Mammary epithelial cell (primary cell): ENCODE measurements at regions of chr9 and their contacts with region 1.

Region 1: GRCh38 chr9:23717505-23717904 is 108.5 kb downstream of the ELAVL2 start:
- DNase-seq: no peak
- H3K4me3 ChIP-seq: no peak overlapping the region
- H3K27ac ChIP-seq: no peak overlapping the region
- H3K4me1 ChIP-seq: no peaks in the 10 kb centered on the region
- H3K27me3 ChIP-seq: no peaks in the 10 kb centered on the region
- CTCF ChIP-seq: no peak

Region 2: DNA sequence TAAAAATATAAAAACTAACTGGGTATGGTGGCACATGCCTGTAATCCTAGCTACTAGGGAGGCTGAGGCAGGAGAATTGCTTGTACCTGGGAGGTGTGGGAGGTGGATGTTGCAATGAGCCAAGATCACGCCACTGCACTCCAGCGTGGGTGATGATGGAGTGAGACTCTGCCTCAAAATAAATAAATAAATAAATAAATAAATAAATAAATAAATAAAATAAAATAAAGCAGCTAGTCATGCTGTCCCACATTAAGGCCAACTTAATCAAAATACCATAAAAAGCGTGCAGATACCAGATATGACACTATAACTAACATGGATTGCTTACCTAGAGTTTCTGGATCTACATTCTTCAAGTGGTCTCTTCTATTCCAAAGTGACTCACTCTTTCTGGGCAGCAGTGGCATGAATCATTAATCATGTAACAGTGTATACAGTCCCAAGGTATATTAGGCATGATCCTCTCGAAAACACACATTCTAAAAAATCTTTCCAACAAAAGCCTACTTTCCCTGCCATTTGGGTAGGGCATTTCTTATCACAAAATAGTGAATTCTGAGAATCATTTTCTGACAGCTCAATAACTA is 78.6 kb before region 1 on chr9:
- CTCF ChIA-PET with region 1: no interaction called
- dilution Hi-C with region 1: loop called (anchors 5 kb)
- in situ Hi-C with region 1: no loop called
- intact Hi-C with region 1: no loop called
- DNase-seq: peak; percentile 63
- H3K4me3 ChIP-seq: no peak overlapping the region
- H3K27ac ChIP-seq: no peak overlapping the region
- H3K4me1 ChIP-seq: peaks cover 5% of the 10 kb centered on the region
- H3K27me3 ChIP-seq: no peaks in the 10 kb centered on the region
- CTCF ChIP-seq: no peak

Region 3: DNA sequence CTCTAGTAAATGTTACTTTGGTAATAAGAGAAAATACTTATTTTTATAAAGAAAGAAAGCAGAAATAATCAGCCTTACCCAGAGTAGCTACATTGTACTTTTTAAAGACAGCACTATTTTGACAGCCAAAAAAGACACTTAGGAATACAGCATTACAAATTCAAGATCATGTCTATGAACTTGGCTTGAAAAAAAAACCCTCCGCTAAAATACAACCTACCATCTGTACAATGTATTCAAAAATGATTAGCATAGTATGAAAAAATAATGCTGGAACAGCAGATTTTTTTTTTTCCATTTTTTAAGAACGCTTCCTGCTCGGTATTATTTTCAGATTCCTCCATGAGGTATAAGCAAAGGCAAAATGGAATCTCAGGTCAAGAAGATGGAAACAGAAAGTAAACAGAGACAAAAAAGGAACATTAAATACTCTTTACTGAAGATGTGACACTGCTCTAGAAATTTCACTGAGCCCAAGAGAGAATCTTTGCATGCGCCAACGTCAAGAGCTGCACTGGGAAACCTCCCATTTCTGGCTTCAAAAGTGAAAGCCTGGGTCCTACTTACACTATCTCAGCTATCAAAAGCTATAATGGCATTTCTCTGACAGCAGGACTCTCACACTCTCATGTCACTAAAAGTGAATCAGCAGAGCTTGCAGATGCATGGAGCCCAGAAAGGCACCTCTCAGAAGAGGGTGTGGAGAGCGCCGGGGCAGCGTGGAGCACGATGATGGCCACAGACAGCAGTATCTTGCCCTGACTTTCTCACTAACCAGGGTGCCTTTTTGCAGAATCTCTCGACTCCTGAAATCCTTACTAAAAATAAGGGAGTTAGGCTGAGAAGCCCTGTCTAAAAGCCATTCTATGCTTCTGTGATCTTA is 58.9 kb before region 1 on chr9:
- CTCF ChIA-PET with region 1: no interaction called
- dilution Hi-C with region 1: no loop called
- in situ Hi-C with region 1: no loop called
- intact Hi-C with region 1: no loop called
- DNase-seq: no peak
- H3K4me3 ChIP-seq: no peak overlapping the region
- H3K27ac ChIP-seq: no peak overlapping the region
- H3K4me1 ChIP-seq: no peaks in the 10 kb centered on the region
- H3K27me3 ChIP-seq: no peaks in the 10 kb centered on the region
- CTCF ChIP-seq: no peak

Region 4: DNA sequence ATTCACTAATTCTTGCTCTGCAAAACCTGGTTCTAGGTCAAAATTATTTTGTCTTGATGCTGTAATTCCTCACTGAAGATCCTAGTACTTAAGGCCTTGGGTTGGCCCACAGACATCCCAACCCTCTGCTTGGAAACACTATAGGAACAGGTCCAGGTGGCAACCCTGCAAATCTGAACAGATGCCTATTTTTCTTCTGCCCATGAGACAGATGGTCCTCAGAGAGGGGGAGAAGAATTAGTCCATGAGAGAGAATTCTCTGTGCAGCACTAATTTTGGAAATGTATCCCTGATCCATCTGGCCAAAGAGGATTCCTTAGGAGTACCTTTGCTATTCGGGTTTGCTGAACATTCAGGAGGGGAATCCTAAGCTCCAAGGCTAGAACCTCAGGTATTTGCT is 47.7 kb before region 1 on chr9:
- CTCF ChIA-PET with region 1: no interaction called
- dilution Hi-C with region 1: loop called (anchors 5 kb)
- in situ Hi-C with region 1: no loop called
- intact Hi-C with region 1: no loop called
- DNase-seq: no peak
- H3K4me3 ChIP-seq: no peak overlapping the region
- H3K27ac ChIP-seq: no peak overlapping the region
- H3K4me1 ChIP-seq: no peaks in the 10 kb centered on the region
- H3K27me3 ChIP-seq: no peaks in the 10 kb centered on the region
- CTCF ChIP-seq: no peak